Activated CD8-positive, alpha-beta T cell treated with anti-CD3 and anti-CD28 coated beads, Interleukin-2, amount 10 ng/mL, durations not matched to agents 7 days and 5 days (primary cell): ENCODE measurements at regions of chr20 and their contacts with region 1.

Region 1: GRCh38 chr20:63707549-63708300 is at the starts of genes ARFRP1 and ZGPAT:
- DNase-seq: peak; percentile 90
- ATAC-seq: peak; percentile 81
- H3K4me3 Mint-ChIP-seq: peak within 1 kb of the TSS; percentile 90
- H3K27ac Mint-ChIP-seq: peak within 1 kb of the TSS; percentile 81
- H3K4me1 Mint-ChIP-seq: peaks cover 44% of the 10 kb centered on the region
- H3K27me3 Mint-ChIP-seq: no peaks in the 10 kb centered on the region
- total RNA-seq, gene ARFRP1: 55.2 to 57.6 TPM
- total RNA-seq, gene ZGPAT: 38.6 to 43.5 TPM

Region 2: GRCh38 chr20:63280929-63281545 is 426.7 kb before region 1 on chr20:
- CTCF ChIA-PET with region 1: no interaction called
- POLR2A ChIA-PET with region 1: no interaction called
- DNase-seq: no peak
- ATAC-seq: no peak
- H3K4me3 Mint-ChIP-seq: no peak overlapping the region
- H3K27ac Mint-ChIP-seq: no peak overlapping the region
- H3K4me1 Mint-ChIP-seq: peaks cover 4% of the 10 kb centered on the region
- H3K27me3 Mint-ChIP-seq: no peaks in the 10 kb centered on the region

Region 3: GRCh38 chr20:63718996-63719395 is 11.3 kb after region 1 on chr20:
- CTCF ChIA-PET with region 1: interaction called, 10 read pairs
- POLR2A ChIA-PET with region 1: interaction called, 12 read pairs
- DNase-seq: no peak
- ATAC-seq: no peak
- H3K4me3 Mint-ChIP-seq: no peak overlapping the region
- H3K27ac Mint-ChIP-seq: no peak overlapping the region
- H3K4me1 Mint-ChIP-seq: peaks cover 22% of the 10 kb centered on the region
- H3K27me3 Mint-ChIP-seq: no peaks in the 10 kb centered on the region

Region 4: GRCh38 chr20:63739130-63740069 is 31.7 kb after region 1 on chr20 and contains the start of gene SLC2A4RG:
- CTCF ChIA-PET with region 1: interaction called, 70 read pairs
- POLR2A ChIA-PET with region 1: interaction called, 19 read pairs
- DNase-seq: peak; percentile 71
- ATAC-seq: peak; percentile 51
- H3K4me3 Mint-ChIP-seq: peak within 1 kb of the TSS; percentile 87
- H3K27ac Mint-ChIP-seq: no peak within 1 kb of the TSS
- H3K4me1 Mint-ChIP-seq: peaks cover 19% of the 10 kb centered on the region
- H3K27me3 Mint-ChIP-seq: no peaks in the 10 kb centered on the region
- total RNA-seq, gene SLC2A4RG: 97.2 TPM

Region 5: GRCh38 chr20:63785691-63786131 is 78.0 kb after region 1 on chr20:
- CTCF ChIA-PET with region 1: interaction called, 15 read pairs
- POLR2A ChIA-PET with region 1: no interaction called
- DNase-seq: no peak
- ATAC-seq: no peak
- H3K4me3 Mint-ChIP-seq: no peak overlapping the region
- H3K27ac Mint-ChIP-seq: no peak overlapping the region
- H3K4me1 Mint-ChIP-seq: peaks cover 22% of the 10 kb centered on the region
- H3K27me3 Mint-ChIP-seq: no peaks in the 10 kb centered on the region